MCF 10A (cell line): ENCODE measurements at regions of chr6 and their contacts with region 1.

Region 1: GRCh38 chr6:134174672-134175198 is 122.3 kb upstream of the SLC2A12 start:
- DNase-seq: peak; percentile 88
- H3K4me3 Mint-ChIP-seq: peak overlapping the region; percentile 95
- H3K27ac Mint-ChIP-seq: peak overlapping the region; percentile 92
- H3K4me1 Mint-ChIP-seq: peaks cover 43% of the 10 kb centered on the region
- H3K27me3 Mint-ChIP-seq: no peaks in the 10 kb centered on the region
- CTCF ChIP-seq: no peak

Region 2: DNA sequence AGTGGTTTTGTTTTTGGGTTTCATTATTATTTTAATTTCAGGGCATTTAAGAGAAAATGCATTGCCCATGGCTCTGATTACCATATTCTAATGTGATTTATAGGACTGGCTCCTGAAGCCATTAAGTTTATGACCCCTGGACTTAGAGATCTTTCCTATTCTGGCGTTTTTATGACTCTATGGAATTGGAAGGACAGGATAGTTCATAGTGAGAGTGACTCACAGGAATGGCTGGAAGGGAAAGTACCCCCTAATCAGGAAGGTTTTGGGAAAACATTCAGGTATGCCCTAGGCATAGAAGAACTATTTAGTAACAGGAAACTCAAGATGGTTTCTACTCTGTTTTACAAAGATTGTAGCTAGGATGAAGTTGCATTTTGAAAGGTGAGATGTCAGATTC is 13.7 kb before region 1 on chr6:
- CTCF ChIA-PET with region 1: interaction called, 8 read pairs
- POLR2A ChIA-PET with region 1: interaction called, 3 read pairs
- intact Hi-C with region 1: loop called (anchors 2 kb)
- DNase-seq: peak; percentile 46
- H3K4me3 Mint-ChIP-seq: no peak overlapping the region
- H3K27ac Mint-ChIP-seq: no peak overlapping the region
- H3K4me1 Mint-ChIP-seq: peaks cover 6% of the 10 kb centered on the region
- H3K27me3 Mint-ChIP-seq: no peaks in the 10 kb centered on the region
- CTCF ChIP-seq: no peak

Region 3: DNA sequence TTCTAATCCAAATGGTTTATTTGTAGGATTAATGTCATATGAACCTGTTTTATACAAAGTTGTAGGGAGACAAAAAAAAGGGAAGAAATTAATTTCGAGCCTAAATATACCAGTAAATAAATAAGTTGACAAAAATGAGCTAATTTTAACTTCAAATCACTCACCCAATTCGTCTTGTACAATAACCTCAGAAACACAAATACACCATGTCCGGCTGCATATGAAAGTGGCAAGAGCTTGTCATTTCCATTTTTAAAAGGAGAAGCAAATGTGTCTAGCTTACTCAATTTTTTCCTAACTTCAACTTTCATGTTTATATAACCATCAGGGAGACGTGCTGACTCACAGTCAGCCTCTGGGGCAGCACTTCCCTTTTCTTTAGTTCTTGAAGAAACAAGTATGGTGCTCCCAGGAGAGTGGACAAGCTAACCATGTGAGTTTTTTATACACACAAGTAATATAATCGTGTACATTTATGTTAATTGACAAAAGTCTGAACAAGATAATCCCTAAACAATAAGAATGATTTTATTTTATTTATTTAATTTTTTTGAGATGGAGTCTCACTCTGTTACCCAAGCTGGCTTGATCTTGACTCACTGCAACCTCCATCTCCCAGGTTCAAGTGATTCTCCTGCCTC is 198.7 kb after region 1 on chr6:
- CTCF ChIA-PET with region 1: interaction called, 4 read pairs
- POLR2A ChIA-PET with region 1: interaction called, 4 read pairs
- intact Hi-C with region 1: loop called (anchors 2 kb)
- DNase-seq: peak; percentile 78
- H3K4me3 Mint-ChIP-seq: peak overlapping the region; percentile 30
- H3K27ac Mint-ChIP-seq: peak overlapping the region; percentile 93
- H3K4me1 Mint-ChIP-seq: peaks cover 32% of the 10 kb centered on the region
- H3K27me3 Mint-ChIP-seq: no peaks in the 10 kb centered on the region
- CTCF ChIP-seq: no peak

Region 4: GRCh38 chr6:134436281-134436815 is 261.6 kb after region 1 on chr6:
- CTCF ChIA-PET with region 1: no interaction called
- POLR2A ChIA-PET with region 1: interaction called, 3 read pairs
- intact Hi-C with region 1: loop called (anchors 1 kb)
- DNase-seq: peak; percentile 94
- H3K4me3 Mint-ChIP-seq: peak overlapping the region; percentile 43
- H3K27ac Mint-ChIP-seq: peak overlapping the region; percentile 88
- H3K4me1 Mint-ChIP-seq: peaks cover 24% of the 10 kb centered on the region
- H3K27me3 Mint-ChIP-seq: no peaks in the 10 kb centered on the region
- CTCF ChIP-seq: no peak

Region 5: GRCh38 chr6:134537146-134537555 is 362.4 kb after region 1 on chr6:
- CTCF ChIA-PET with region 1: interaction called, 6 read pairs
- POLR2A ChIA-PET with region 1: interaction called, 5 read pairs
- intact Hi-C with region 1: loop called (anchors 1 kb)
- DNase-seq: peak; percentile 98
- H3K4me3 Mint-ChIP-seq: no peak overlapping the region
- H3K27ac Mint-ChIP-seq: peak overlapping the region; percentile 65
- H3K4me1 Mint-ChIP-seq: peaks cover 32% of the 10 kb centered on the region
- H3K27me3 Mint-ChIP-seq: no peaks in the 10 kb centered on the region
- CTCF ChIP-seq: no peak

Region 6: GRCh38 chr6:134640975-134641429 is 466.3 kb after region 1 on chr6:
- CTCF ChIA-PET with region 1: interaction called, 22 read pairs
- POLR2A ChIA-PET with region 1: interaction called, 24 read pairs
- intact Hi-C with region 1: loop called (anchors 1 kb)
- DNase-seq: peak; percentile 95
- H3K4me3 Mint-ChIP-seq: no peak overlapping the region
- H3K27ac Mint-ChIP-seq: peak overlapping the region; percentile 81
- H3K4me1 Mint-ChIP-seq: peaks cover 25% of the 10 kb centered on the region
- H3K27me3 Mint-ChIP-seq: no peaks in the 10 kb centered on the region
- CTCF ChIP-seq: peak; percentile 79

Region 7: GRCh38 chr6:134938896-134939295 is 764.2 kb after region 1 on chr6:
- CTCF ChIA-PET with region 1: interaction called, 4 read pairs
- POLR2A ChIA-PET with region 1: interaction called, 3 read pairs
- intact Hi-C with region 1: loop called (anchors 5 kb)
- DNase-seq: no peak
- H3K4me3 Mint-ChIP-seq: no peak overlapping the region
- H3K27ac Mint-ChIP-seq: no peak overlapping the region
- H3K4me1 Mint-ChIP-seq: no peaks in the 10 kb centered on the region
- H3K27me3 Mint-ChIP-seq: no peaks in the 10 kb centered on the region
- CTCF ChIP-seq: no peak